PC-9 (cell line): ENCODE measurements at regions of chr6 and their contacts with region 1.

Region 1: GRCh38 chr6:57190140-57190539 is 18.0 kb downstream of the BAG2 start:
- DNase-seq: no peak
- H3K4me3 ChIP-seq: no peak overlapping the region
- H3K27ac ChIP-seq: no peak overlapping the region
- H3K4me1 ChIP-seq: no peaks in the 10 kb centered on the region
- H3K27me3 ChIP-seq: no peaks in the 10 kb centered on the region
- CTCF ChIP-seq: peak; percentile 45; the same call in 1 of the 2 replicates

Region 2: DNA sequence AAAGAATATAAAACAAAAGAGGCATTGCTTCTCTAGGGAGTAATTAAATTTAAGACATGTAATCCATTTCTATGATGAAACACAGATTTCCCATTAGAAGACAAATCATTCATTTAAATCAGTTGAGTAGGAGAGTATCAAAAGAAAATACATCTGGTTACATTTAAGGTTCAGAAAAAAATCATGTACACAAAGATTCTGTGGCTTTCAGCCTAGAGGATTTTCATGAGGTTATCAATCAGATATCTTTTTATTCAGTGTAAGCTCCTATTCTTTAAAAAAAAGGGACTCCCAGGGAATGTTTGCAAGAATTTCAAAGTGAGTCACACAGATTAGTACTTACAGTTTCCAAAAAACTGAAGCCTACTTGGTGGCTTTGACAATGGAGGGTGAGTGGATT is 967.6 kb before region 1 on chr6:
- CTCF ChIA-PET with region 1: no interaction called
- POLR2A ChIA-PET with region 1: interaction called, 12 read pairs
- intact Hi-C with region 1: no loop called
- DNase-seq: no peak
- H3K4me3 ChIP-seq: no peak overlapping the region
- H3K27ac ChIP-seq: no peak overlapping the region
- H3K4me1 ChIP-seq: no peaks in the 10 kb centered on the region
- H3K27me3 ChIP-seq: no peaks in the 10 kb centered on the region
- CTCF ChIP-seq: no peak

Region 3: DNA sequence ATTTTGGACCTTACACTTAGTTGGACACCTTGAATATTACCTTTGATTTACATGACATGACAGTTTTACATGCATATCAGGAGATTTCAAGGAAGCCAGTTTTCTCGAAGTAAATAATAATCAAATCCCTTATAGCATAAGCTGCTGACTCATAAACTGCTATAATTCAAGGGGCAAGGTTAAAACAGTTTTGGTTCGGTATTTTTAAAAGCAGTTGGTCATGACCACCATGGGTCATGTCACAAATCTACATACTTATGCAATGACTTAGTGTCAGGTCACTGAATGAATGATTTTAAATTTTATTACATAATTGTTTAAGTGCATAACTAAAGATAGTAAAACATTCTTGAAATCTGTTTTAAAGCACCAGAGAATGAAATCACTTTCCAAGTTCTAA is 705.5 kb before region 1 on chr6:
- CTCF ChIA-PET with region 1: no interaction called
- POLR2A ChIA-PET with region 1: interaction called, 22 read pairs
- intact Hi-C with region 1: no loop called
- DNase-seq: no peak
- H3K4me3 ChIP-seq: no peak overlapping the region
- H3K27ac ChIP-seq: no peak overlapping the region
- H3K4me1 ChIP-seq: no peaks in the 10 kb centered on the region
- H3K27me3 ChIP-seq: no peaks in the 10 kb centered on the region
- CTCF ChIP-seq: no peak

Region 4: DNA sequence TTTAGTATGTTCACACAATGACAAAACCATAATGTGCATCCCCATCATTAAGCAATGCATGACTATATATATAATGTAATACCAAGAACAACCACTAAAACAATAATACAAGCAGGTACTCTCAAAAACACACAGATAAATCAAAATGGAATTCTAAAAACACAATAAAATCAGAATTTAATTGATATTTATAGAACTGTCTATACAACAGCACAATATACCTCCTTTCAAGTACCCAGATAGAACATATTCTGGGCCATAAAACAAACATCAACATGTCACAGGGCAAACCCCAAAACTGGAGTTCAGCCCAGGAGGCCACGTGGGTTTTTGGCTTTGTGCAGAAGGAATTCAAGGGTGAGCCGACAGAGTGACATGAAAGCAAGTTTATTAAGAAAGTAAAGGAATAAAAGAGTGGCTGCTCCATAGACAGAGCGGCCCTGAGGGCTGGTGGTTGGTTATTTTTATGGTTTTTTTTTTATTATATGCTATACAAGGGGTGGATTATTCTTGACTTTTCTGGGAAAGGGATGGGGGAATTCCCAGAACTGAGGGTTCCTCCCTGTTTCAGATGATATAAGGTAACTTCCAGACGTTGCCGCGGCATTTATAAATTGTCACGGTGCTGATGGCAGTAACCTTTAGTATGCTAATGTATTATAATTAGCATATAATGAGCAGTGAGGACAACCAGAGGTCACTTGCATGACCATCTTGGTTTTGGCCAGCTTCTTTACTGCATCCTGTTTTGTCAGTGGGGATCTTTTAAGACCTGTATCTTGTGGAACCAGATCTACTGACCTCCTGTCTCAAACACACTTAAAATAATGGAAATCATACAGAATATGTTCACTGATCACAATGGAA is 26.3 kb after region 1 on chr6:
- CTCF ChIA-PET with region 1: no interaction called
- POLR2A ChIA-PET with region 1: interaction called, 17 read pairs
- intact Hi-C with region 1: no loop called
- DNase-seq: no peak
- H3K4me3 ChIP-seq: no peak overlapping the region
- H3K27ac ChIP-seq: no peak overlapping the region
- H3K4me1 ChIP-seq: 0 out of 2 replicates have a peak, but pooled peaks cover 12% of the 10 kb centered on the region
- H3K27me3 ChIP-seq: no peaks in the 10 kb centered on the region
- CTCF ChIP-seq: peak; percentile 39; the same call in 1 of the 2 replicates

Region 5: DNA sequence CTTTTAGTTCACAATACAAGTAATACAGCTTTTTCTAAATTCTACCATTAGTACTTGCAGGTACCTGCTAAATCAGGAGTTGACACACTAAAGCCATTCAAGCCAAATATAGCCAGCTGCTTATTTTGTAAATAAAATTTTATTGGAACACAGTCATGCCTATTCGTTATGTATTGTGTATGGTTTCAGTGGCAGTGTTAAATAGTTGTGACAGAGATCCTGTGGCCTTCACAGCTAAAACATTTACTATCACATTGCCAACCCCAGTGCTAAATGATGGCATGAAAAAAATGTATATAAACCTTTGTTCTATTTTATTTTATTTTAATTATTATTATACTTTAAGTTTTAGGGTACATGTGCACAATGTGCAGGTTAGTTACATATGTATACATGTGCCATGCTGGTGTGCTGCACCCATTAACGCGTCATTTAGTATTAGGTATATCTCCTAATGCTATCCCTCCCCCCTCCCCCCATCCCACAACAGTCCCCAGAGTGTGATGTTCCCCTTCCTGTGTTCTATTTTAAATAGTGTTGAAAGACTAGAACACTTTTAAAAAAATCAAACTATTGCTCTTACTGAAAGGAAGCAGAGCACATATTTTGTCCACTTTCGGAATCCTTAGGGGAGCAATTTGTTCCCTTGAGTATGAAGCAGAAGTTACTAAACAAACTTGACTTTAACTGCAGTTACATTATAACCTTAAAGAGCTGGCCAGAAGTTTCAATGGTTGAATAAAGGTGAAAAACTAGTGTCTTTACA is 243.0 kb after region 1 on chr6:
- CTCF ChIA-PET with region 1: no interaction called
- POLR2A ChIA-PET with region 1: no interaction called
- intact Hi-C with region 1: no loop called
- DNase-seq: no peak
- H3K4me3 ChIP-seq: no peak overlapping the region
- H3K27ac ChIP-seq: no peak overlapping the region
- H3K4me1 ChIP-seq: 0 out of 2 replicates have a peak, but pooled peaks cover 4% of the 10 kb centered on the region
- H3K27me3 ChIP-seq: no peaks in the 10 kb centered on the region
- CTCF ChIP-seq: no peak